IMR-90 (cell line): ENCODE measurements at regions of chr12 and their contacts with region 1.

Region 1: DNA sequence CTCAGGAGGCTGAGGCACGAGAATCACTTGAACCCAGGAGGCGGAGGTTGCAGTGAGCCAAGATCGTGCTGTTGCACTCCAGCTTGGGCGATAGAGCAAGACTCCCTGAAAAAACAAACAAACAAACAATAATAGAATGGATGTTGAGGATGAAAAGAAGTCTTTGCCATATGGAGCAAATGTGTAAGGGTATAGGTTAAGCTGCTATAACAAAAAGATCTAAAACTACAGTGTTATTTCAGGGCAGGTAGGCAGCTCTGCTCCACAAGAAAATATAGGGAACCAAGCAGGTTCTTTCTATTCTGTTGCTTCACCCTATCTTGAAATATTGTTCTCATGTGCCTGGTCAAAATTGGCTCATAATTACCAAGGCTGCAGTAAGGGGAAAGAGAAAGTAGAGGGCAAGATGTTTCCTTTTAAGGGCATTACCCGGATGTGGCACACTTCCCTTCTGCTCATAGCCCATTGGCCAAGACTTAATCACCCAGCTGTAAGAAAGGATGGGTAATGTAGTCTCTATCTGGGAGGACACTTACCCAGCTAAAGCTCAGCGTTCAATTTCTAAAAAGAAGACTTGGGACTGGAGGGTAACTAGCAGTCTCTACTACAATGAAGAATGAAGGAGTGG is 23.5 kb downstream of the SDSL start:
- DNase-seq: no peak
- ATAC-seq: no peak; the same call in 1 of the 2 replicates
- H3K4me3 ChIP-seq: no peak overlapping the region
- H3K27ac ChIP-seq: no peak overlapping the region
- H3K4me1 ChIP-seq: no peaks in the 10 kb centered on the region
- H3K27me3 ChIP-seq: peaks cover 11% of the 10 kb centered on the region
- CTCF ChIP-seq: no peak
- POLR2A ChIP-seq: no peak
- RAD21 ChIP-seq: no peak

Region 2: GRCh38 chr12:113497693-113498092 is 52.0 kb after region 1 on chr12:
- CTCF ChIA-PET with region 1: no interaction called
- POLR2A ChIA-PET with region 1: no interaction called
- dilution Hi-C with region 1: no loop called
- in situ Hi-C with region 1: no loop called
- intact Hi-C with region 1: no loop called
- DNase-seq: no peak
- ATAC-seq: no peak
- H3K4me3 ChIP-seq: no peak overlapping the region
- H3K27ac ChIP-seq: no peak overlapping the region
- H3K4me1 ChIP-seq: no peaks in the 10 kb centered on the region
- H3K27me3 ChIP-seq: peaks cover 4% of the 10 kb centered on the region; the same call in 1 of the 2 replicates
- CTCF ChIP-seq: no peak
- POLR2A ChIP-seq: no peak
- RAD21 ChIP-seq: no peak

Region 3: DNA sequence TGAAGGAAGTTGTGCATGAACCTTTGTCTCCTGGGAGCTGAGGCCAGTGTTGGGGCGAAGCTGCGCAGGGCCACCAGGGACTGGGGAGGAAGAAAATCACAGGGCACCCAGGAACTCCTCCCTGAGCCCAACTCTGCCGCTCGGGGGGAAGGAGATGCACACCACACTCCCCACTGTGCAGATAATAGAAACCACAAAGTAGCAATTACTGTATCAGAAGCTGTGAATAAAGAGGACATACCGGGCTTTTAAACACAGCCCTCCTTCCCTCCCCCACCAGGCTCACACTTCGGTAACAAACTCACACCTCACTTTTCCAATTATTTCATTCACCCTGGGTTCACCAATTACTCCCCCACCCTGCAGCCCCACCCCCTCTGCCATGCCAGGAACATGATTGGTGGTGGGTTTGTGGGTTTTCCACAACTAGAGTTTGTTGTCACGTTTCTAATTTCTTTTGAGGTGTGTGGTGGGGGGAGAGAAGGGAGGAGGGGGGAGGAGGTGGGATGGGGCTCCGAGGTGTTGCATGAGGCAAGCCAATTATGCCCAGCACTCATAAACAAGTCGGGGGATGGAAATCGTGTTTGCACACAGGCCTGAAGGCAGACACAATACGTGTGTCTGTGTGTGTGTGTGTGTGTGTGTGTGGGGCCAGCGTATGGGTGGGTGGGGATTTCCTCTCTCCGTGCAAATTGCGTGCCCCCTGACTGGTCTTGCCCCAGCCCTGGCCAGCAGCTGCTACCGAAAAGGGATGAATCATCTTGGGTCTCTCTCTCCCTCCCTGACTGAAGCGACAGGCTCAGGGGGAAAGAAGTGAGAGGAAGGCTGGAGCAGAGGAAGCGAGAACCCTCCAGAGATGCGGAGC is 417.2 kb after region 1 on chr12:
- CTCF ChIA-PET with region 1: no interaction called
- POLR2A ChIA-PET with region 1: interaction called, 13 read pairs
- dilution Hi-C with region 1: no loop called
- in situ Hi-C with region 1: no loop called
- intact Hi-C with region 1: no loop called
- DNase-seq: peak; percentile 94
- ATAC-seq: peak; percentile 77
- H3K4me3 ChIP-seq: no peak overlapping the region
- H3K27ac ChIP-seq: peak overlapping the region; percentile 18; the same call in 1 of the 2 replicates
- H3K4me1 ChIP-seq: peaks cover 21% of the 10 kb centered on the region
- H3K27me3 ChIP-seq: no peaks in the 10 kb centered on the region
- CTCF ChIP-seq: no peak
- POLR2A ChIP-seq: no peak
- RAD21 ChIP-seq: no peak